ENCODE measurements at regions of chr3 and their contacts with region 1.

Region 1: GRCh38 chr3:120425572-120426250 is 25.1 kb downstream of the FSTL1 start:
- DNase-seq: no peak
- H3K4me3 ChIP-seq: no peak overlapping the region
- CTCF ChIP-seq: no peak

Region 2: DNA sequence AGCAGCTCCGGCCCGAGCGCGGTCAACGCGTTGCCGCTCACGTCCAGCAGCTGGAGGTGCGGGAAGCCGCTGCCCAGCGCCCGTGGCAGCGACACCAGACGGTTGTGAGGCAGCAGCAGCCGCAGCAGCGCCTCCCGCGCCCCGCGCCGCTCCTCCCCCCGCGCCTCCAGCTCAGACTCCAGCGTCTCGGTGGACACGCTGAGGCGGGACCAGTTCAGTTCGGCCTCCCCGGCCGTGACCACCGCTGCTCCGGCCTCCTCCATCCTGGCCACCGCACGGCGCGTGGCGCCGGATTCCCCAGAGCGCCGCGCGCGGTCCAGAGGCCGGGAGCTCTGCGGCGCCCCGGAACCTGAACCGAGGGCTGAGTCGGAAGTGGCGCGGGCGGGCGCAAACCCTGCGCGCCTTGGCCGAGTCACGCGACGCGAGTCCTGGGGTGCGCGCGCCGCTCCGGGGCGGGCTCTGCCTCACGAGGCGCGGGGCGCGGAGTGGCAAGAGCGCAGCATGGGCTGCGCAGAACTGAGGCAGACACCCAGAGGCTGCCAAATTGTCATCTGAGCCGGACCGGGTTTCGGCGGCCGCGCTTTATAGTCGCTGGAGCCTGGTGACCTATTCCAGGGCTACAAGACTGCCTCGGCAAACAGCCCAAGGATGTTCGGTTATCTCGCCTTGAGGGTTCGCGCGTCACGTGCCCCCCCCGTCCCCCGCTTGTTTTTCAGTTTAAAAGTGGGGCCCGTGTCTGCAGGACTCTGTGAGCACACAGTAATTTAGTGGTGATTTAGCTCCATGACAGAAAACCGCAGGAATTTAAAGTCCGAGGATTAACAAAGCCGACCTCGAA is 76.5 kb before region 1 on chr3 and contains the start of gene LRRC58:
- CTCF ChIA-PET with region 1: no interaction called
- POLR2A ChIA-PET with region 1: no interaction called
- DNase-seq: no peak
- H3K4me3 ChIP-seq: peak within 1 kb of the TSS; percentile 89
- CTCF ChIP-seq: peak; percentile 44

Region 3: GRCh38 chr3:120438665-120439370 is 13.1 kb after region 1 on chr3:
- CTCF ChIA-PET with region 1: interaction called, 10 read pairs
- POLR2A ChIA-PET with region 1: interaction called, 14 read pairs
- DNase-seq: no peak
- H3K4me3 ChIP-seq: no peak overlapping the region
- CTCF ChIP-seq: no peak

Measured in AG04449 (cell line).